Caco-2 (cell line): ENCODE measurements at regions of chr10 and their contacts with region 1.

Region 1: GRCh38 chr10:103859161-103860086 is 4.0 kb upstream of the SH3PXD2A start:
- DNase-seq: peak; percentile 62 to 79
- H3K4me3 ChIP-seq: no peak overlapping the region
- H3K4me3 Mint-ChIP-seq: no peak overlapping the region
- H3K27ac Mint-ChIP-seq: no peak overlapping the region
- H3K4me1 ChIP-seq: peaks cover 6% of the 10 kb centered on the region
- H3K4me1 Mint-ChIP-seq: peaks cover 2% of the 10 kb centered on the region
- H3K27me3 ChIP-seq: no peaks in the 10 kb centered on the region
- H3K27me3 Mint-ChIP-seq: no peaks in the 10 kb centered on the region
- CTCF ChIP-seq: peak; percentile 71 to 82

Region 2: GRCh38 chr10:103592186-103593021 is 267.0 kb before region 1 on chr10:
- CTCF ChIA-PET with region 1: no interaction called
- POLR2A ChIA-PET with region 1: no interaction called
- intact Hi-C with region 1: loop called (anchors 10 kb)
- DNase-seq: peak; percentile 63 to 77
- H3K4me3 ChIP-seq: no peak overlapping the region
- H3K4me3 Mint-ChIP-seq: no peak overlapping the region
- H3K27ac Mint-ChIP-seq: no peak overlapping the region
- H3K4me1 ChIP-seq: no peaks in the 10 kb centered on the region
- H3K4me1 Mint-ChIP-seq: no peaks in the 10 kb centered on the region
- H3K27me3 ChIP-seq: no peaks in the 10 kb centered on the region
- H3K27me3 Mint-ChIP-seq: no peaks in the 10 kb centered on the region
- CTCF ChIP-seq: peak; percentile 89 to 92

Region 3: GRCh38 chr10:103781329-103782061 is 77.9 kb before region 1 on chr10:
- CTCF ChIA-PET with region 1: no interaction called
- POLR2A ChIA-PET with region 1: no interaction called
- intact Hi-C with region 1: loop called (anchors 1 kb)
- DNase-seq: peak in 1 of 2 experiments; percentile 56
- H3K4me3 ChIP-seq: no peak overlapping the region
- H3K4me3 Mint-ChIP-seq: no peak overlapping the region
- H3K27ac Mint-ChIP-seq: no peak overlapping the region
- H3K4me1 ChIP-seq: 0 out of 2 replicates have a peak, but pooled peaks cover 8% of the 10 kb centered on the region
- H3K4me1 Mint-ChIP-seq: peaks cover 30% of the 10 kb centered on the region
- H3K27me3 ChIP-seq: no peaks in the 10 kb centered on the region
- H3K27me3 Mint-ChIP-seq: no peaks in the 10 kb centered on the region
- CTCF ChIP-seq: peak; percentile 35 to 42

Region 4: DNA sequence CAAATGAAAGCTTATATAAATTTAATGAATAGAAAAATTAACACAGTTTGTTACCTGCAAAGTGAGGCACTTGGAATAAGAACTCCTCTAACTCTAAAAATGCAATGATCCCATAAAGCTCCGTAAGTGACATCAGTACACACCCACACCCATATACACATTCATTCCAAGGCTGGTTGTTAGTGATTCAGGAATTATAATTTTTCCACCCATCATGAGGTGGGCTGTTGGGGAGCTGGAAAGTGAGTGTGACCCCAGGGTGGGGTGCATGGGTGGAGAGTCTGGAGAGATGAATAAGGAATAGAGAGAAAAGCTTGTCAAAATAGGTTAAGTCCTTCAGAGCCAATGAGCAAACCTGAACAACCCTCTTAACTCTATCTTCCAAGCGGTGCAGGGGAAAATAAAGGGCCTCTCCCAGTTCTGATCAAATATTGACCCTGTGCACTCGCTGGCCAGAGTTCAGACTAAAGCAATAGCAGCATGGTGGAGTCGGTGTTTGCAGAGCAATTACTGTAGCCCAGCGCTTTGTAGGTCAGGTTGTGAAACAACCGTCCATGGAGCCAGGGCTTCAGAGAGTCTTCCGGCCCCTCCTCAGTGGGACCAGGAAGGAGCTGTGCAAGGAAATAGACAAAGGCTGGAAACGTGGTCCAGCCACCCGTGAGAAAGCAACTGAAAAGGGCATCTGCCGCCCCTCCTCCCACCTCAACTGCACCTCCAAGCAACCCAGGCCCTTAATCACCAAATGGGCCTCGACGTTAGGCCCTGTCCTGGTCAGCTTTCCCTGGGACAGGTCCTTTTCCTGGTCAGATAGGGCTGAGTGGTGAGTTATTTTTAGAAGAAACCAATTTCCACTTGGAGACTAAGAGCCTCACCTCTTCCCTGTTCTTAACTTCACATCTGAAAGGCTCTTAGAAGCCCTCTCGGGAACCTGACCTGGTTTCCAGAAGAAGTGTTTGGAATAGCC is 65.2 kb before region 1 on chr10:
- CTCF ChIA-PET with region 1: interaction called, 6 read pairs
- POLR2A ChIA-PET with region 1: no interaction called
- intact Hi-C with region 1: loop called (anchors 1 kb)
- DNase-seq: peak; percentile 94 to 97
- H3K4me3 ChIP-seq: 0 out of 2 replicates have a peak overlapping the region, but pooled peaks have one; percentile 1
- H3K4me3 Mint-ChIP-seq: peak overlapping the region; percentile 62
- H3K27ac Mint-ChIP-seq: peak overlapping the region; percentile 90
- H3K4me1 ChIP-seq: peaks cover 49% of the 10 kb centered on the region
- H3K4me1 Mint-ChIP-seq: peaks cover 31% of the 10 kb centered on the region
- H3K27me3 ChIP-seq: no peaks in the 10 kb centered on the region
- H3K27me3 Mint-ChIP-seq: no peaks in the 10 kb centered on the region
- CTCF ChIP-seq: no peak

Region 5: DNA sequence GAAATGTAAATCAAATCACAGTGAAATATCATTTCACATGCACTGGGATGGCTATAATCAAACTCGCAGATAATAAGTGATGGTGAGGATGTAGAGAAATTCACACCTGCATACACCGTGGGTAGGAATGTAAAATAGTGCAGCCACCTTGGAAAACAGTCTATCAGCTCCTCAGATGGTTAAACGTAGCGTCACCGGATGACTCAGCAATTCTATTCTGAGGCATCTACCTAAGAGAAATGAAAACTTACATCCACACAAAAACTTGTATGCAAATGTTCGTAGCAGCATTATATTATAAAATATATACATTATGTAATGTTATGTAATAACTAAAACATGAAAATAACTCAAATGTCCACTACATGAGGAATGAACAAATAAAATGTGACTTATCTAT is 43.0 kb before region 1 on chr10:
- CTCF ChIA-PET with region 1: interaction called, 3 read pairs
- POLR2A ChIA-PET with region 1: no interaction called
- intact Hi-C with region 1: loop called (anchors 5 kb)
- DNase-seq: no peak
- H3K4me3 ChIP-seq: no peak overlapping the region
- H3K4me3 Mint-ChIP-seq: no peak overlapping the region
- H3K27ac Mint-ChIP-seq: no peak overlapping the region
- H3K4me1 ChIP-seq: peaks cover 40% of the 10 kb centered on the region
- H3K4me1 Mint-ChIP-seq: peaks cover 48% of the 10 kb centered on the region
- H3K27me3 ChIP-seq: no peaks in the 10 kb centered on the region
- H3K27me3 Mint-ChIP-seq: no peaks in the 10 kb centered on the region
- CTCF ChIP-seq: no peak

Region 6: GRCh38 chr10:103835096-103836050 is 24.1 kb before region 1 on chr10:
- CTCF ChIA-PET with region 1: interaction called, 4 read pairs
- POLR2A ChIA-PET with region 1: no interaction called
- intact Hi-C with region 1: loop called (anchors 2 kb)
- DNase-seq: no peak
- H3K4me3 ChIP-seq: no peak overlapping the region
- H3K4me3 Mint-ChIP-seq: no peak overlapping the region
- H3K27ac Mint-ChIP-seq: no peak overlapping the region
- H3K4me1 ChIP-seq: peaks cover 32% of the 10 kb centered on the region
- H3K4me1 Mint-ChIP-seq: peaks cover 26% of the 10 kb centered on the region
- H3K27me3 ChIP-seq: no peaks in the 10 kb centered on the region
- H3K27me3 Mint-ChIP-seq: no peaks in the 10 kb centered on the region
- CTCF ChIP-seq: no peak

Region 7: GRCh38 chr10:104622598-104623209 is 763.3 kb after region 1 on chr10:
- CTCF ChIA-PET with region 1: no interaction called
- POLR2A ChIA-PET with region 1: no interaction called
- intact Hi-C with region 1: no loop called
- DNase-seq: peak; percentile 59 to 71
- H3K4me3 ChIP-seq: no peak overlapping the region
- H3K4me3 Mint-ChIP-seq: no peak overlapping the region
- H3K27ac Mint-ChIP-seq: no peak overlapping the region
- H3K4me1 ChIP-seq: no peaks in the 10 kb centered on the region
- H3K4me1 Mint-ChIP-seq: no peaks in the 10 kb centered on the region
- H3K27me3 ChIP-seq: no peaks in the 10 kb centered on the region
- H3K27me3 Mint-ChIP-seq: peaks cover 23% of the 10 kb centered on the region
- CTCF ChIP-seq: peak; percentile 73 to 85